Ascending aorta (tissue), 2 donors: ENCODE measurements at regions of chr14 and their contacts with region 1.

Region 1: DNA sequence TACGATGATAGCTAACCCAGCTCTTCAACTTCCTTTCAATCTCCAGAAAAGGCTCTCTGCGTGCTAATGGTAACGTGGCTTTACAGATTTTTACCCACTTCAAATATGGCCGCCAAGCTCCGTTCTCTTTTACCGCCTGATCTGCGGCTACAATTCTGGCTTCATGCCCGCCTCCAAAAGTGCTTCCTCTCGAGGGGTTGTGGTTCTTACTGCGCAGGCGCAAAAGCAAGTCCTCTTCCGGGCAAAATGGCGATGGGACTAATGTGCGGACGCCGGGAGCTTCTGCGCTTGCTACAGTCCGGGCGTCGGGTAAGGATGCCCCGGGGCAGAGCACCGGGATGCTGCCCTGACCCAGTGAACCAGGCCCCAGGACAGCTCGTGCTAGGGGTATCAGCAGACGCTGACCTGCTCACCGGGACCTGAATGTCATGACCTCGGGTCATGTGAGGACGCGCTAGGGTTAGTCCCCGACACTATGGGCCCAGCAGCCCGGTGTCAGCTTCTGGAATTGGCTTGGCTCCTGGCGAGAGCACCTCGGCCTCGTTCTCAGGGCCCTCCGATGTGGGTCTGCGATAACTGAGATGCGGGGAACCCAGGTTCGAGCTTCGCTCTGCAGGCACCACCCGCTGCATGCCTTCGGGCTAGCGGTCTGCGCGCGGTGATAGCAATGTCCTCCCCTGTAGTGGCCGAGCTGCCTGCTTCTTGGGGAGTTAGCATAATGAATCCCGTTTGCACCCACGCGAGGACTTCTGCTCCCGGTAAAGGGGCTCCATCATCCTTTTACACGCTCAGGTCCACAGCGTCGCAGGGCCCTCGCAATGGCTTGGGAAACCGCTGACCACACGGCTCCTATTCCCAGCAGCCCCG is at the start of gene OXA1L:
- DNase-seq: peak; percentile 89 to 98
- H3K4me3 ChIP-seq: peak within 1 kb of the TSS; percentile 84 to 94
- H3K27ac ChIP-seq: peak within 1 kb of the TSS; percentile 78 to 85
- H3K4me1 ChIP-seq: peaks cover 0 to 19% of the 10 kb centered on the region in 2 donors
- H3K27me3 ChIP-seq: no peaks in the 10 kb centered on the region
- CTCF ChIP-seq: no peak
- total RNA-seq, gene OXA1L: 68.3 TPM

Region 2: GRCh38 chr14:22598099-22598899 is 168.4 kb before region 1 on chr14 and contains the start of gene ABHD4:
- intact Hi-C with region 1: loop called (anchors 2 kb)
- DNase-seq: peak; percentile 35 to 89
- H3K4me3 ChIP-seq: peak within 1 kb of the TSS; percentile 76 to 89
- H3K27ac ChIP-seq: peak within 1 kb of the TSS; percentile 84 to 91
- H3K4me1 ChIP-seq: peaks cover 6 to 13% of the 10 kb centered on the region in 2 donors
- H3K27me3 ChIP-seq: no peaks in the 10 kb centered on the region
- CTCF ChIP-seq: peak in 1 of 3 experiments; percentile 36
- total RNA-seq, gene ABHD4: 33.5 TPM